ENCODE measurements at regions of chr10 and their contacts with region 1.

Region 1: DNA sequence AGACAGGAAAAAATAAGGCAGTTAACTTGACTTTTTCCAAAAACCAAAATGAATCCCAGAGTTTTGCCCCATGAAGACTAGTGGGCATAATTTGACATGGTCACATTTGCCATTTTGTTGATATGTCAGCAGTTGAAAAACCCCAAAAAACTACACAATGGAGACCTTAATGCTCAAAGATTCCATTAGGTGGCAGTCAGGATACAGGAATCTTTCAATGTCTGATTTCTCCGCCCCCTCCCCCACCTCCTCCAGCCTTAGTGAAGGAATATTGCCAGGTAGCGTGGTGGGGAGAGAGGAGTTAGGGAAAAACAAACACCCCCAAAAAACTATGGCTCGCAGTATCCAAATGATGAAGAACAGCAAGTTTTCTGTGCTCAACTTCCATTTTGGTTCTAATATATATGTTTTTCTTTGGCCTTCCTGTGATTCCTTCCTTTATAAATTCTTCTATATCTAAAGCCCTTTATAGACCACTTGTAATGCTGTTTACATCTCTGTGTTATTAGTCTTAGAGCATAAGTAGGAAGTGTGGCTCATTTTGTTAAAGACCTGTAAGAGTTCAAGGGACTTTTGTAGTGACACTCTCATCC is 6.7 kb upstream of the SMNDC1 start:
- DNase-seq: peak; percentile 33
- H3K4me3 Mint-ChIP-seq: no peak overlapping the region
- H3K27ac Mint-ChIP-seq: no peak overlapping the region
- H3K4me1 Mint-ChIP-seq: no peaks in the 10 kb centered on the region
- H3K27me3 Mint-ChIP-seq: no peaks in the 10 kb centered on the region
- CTCF ChIP-seq: no peak

Region 2: DNA sequence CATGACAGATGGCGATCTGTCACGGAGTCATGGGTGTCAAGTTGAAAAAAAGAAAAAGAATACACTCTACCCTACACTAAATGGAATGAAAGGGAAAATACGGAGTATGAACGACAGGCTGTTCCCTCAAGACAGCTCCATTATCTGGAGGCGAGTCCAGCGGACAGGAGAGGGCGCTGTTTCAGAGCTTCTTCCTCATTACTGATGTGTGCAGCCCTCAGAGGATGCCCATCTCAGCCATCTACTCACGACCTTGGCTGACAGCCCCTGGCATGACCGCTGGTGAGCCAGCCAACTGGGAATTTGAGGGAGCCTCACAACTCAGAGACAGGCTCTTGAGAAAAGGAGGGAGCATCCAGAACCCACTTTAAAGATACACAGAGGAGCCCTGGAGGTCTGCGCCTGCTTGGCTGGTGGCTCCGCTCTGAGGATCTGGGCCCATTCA is 42.9 kb after region 1 on chr10:
- CTCF ChIA-PET with region 1: no interaction called
- intact Hi-C with region 1: loop called (anchors 5 kb)
- DNase-seq: peak; percentile 72
- H3K4me3 Mint-ChIP-seq: no peak overlapping the region
- H3K27ac Mint-ChIP-seq: no peak overlapping the region
- H3K4me1 Mint-ChIP-seq: peaks cover 33% of the 10 kb centered on the region
- H3K27me3 Mint-ChIP-seq: no peaks in the 10 kb centered on the region
- CTCF ChIP-seq: peak; percentile 33

Region 3: DNA sequence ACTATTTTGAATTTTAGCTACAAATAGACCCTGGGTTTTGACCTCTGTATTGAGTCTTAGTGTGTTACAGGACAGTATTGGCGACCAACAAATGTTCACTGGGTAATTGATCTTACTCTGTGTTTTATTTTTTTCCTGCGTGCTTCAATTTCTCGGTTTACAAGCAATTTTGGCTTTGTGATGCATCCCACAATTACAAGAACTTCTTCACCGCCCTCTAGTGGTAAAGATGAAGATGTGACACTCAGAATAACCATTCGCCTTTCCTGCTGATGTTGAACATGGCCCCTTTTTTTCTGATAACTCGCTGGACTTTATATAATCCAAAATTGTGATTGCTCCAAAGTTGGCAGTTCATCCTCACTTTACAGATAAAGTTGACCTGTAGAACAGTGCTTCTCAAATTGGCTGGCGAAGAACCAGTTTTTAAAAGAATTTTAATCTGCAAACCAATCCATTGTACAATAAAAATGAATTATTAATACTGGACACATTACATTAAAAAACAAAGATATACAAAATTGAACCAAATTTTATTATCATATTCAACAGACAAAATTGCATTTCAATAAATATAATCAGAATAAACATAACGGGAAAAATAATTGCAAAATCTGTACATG is 235.8 kb after region 1 on chr10:
- CTCF ChIA-PET with region 1: no interaction called
- intact Hi-C with region 1: loop called (anchors 1 kb)
- DNase-seq: no peak
- H3K4me3 Mint-ChIP-seq: no peak overlapping the region
- H3K27ac Mint-ChIP-seq: no peak overlapping the region
- H3K4me1 Mint-ChIP-seq: peaks cover 8% of the 10 kb centered on the region
- H3K27me3 Mint-ChIP-seq: peaks cover 13% of the 10 kb centered on the region
- CTCF ChIP-seq: peak; percentile 41

Measured in Calu3 (cell line).